HepG2 (cell line): ENCODE measurements at regions of chr12 and their contacts with region 1.

Region 1: GRCh38 chr12:10212201-10213131 is at the start of gene GABARAPL1:
- DNase-seq: peak; percentile 95
- ATAC-seq: peak; percentile 96
- H3K4me3 ChIP-seq: peak within 1 kb of the TSS; percentile 82 to 97 (median 91)
- H3K27ac ChIP-seq: peak within 1 kb of the TSS; percentile 80
- H3K4me1 ChIP-seq: peaks cover 19% of the 10 kb centered on the region; the same call in 1 of the 2 replicates
- H3K27me3 ChIP-seq: no peaks in the 10 kb centered on the region; a peak in 1 of 5 replicates
- CTCF ChIP-seq: no peak
- EP300 ChIP-seq: peak in 1 of 2 experiments; percentile 9; a peak in 1 of 4 replicates
- POLR2A ChIP-seq: peak; percentile 53 to 77; a peak in 3 of 4 replicates
- RAD21 ChIP-seq: no peak
- total RNA-seq, gene GABARAPL1: 7.9 and 8.1 TPM in 2 replicates

Region 2: GRCh38 chr12:10069099-10069498 is 143.4 kb before region 1 on chr12:
- CTCF ChIA-PET with region 1: no interaction called
- POLR2A ChIA-PET with region 1: no interaction called
- in situ Hi-C with region 1: no loop called
- intact Hi-C with region 1: no loop called
- DNase-seq: no peak
- ATAC-seq: no peak
- H3K4me3 ChIP-seq: no peak overlapping the region
- H3K27ac ChIP-seq: no peak overlapping the region
- H3K4me1 ChIP-seq: no peaks in the 10 kb centered on the region
- H3K27me3 ChIP-seq: peaks cover 2 to 4% of the 10 kb centered on the region in 2 experiments; a peak in 1 of 5 replicates
- CTCF ChIP-seq: no peak
- EP300 ChIP-seq: no peak
- POLR2A ChIP-seq: no peak
- RAD21 ChIP-seq: no peak

Region 3: DNA sequence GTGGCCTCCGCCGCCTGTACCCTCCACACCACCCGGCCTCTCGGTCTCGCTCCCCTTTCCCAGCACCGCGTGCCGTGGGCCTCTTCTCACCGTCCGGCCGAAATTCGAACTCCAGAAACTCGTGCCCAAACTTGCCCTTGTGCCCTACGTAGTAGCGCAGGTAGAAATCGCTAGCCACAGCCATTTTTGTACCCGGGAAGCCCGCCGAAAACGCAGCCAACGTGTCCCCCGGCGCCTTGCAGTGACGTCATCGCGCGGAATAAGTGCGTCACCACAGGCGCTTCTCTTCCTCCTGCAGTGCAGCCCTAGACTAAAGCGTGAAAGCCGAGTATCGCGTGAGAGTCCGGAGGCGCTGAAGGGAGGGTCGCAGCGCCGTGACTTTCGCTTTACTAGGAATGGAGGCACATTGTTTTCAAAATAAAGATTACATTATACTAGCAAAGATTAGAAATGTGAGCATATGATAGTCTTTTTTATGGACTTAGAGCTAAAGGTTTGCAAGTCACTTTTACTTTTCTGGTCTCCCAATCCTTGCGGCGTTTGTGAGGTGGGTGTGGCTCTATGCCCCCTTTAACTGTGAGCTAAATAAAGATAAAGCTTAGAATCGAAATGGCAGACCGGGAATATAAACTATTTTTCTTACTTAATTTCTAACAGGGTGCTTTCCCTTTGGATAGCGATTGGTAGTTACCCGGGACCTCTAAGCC is 401.0 kb after region 1 on chr12 and contains the start of gene MAGOHB:
- CTCF ChIA-PET with region 1: no interaction called
- POLR2A ChIA-PET with region 1: interaction called, 3 read pairs
- in situ Hi-C with region 1: no loop called
- intact Hi-C with region 1: loop called (anchors 1 kb)
- DNase-seq: peak; percentile 92
- ATAC-seq: peak; percentile 98
- H3K4me3 ChIP-seq: peak within 1 kb of the TSS; percentile 89 to 97 (median 90)
- H3K27ac ChIP-seq: peak within 1 kb of the TSS; percentile 86
- H3K4me1 ChIP-seq: peaks cover 26% of the 10 kb centered on the region
- H3K27me3 ChIP-seq: peaks cover 0 to 2% of the 10 kb centered on the region in 2 experiments; a peak in 1 of 5 replicates
- CTCF ChIP-seq: no peak; the same call in 1 of the 2 replicates
- EP300 ChIP-seq: no peak; a peak in 1 of 4 replicates
- POLR2A ChIP-seq: peak; percentile 70 to 94
- RAD21 ChIP-seq: no peak
- total RNA-seq, gene MAGOHB: 49.8 and 84.5 TPM in 2 replicates

Region 4: DNA sequence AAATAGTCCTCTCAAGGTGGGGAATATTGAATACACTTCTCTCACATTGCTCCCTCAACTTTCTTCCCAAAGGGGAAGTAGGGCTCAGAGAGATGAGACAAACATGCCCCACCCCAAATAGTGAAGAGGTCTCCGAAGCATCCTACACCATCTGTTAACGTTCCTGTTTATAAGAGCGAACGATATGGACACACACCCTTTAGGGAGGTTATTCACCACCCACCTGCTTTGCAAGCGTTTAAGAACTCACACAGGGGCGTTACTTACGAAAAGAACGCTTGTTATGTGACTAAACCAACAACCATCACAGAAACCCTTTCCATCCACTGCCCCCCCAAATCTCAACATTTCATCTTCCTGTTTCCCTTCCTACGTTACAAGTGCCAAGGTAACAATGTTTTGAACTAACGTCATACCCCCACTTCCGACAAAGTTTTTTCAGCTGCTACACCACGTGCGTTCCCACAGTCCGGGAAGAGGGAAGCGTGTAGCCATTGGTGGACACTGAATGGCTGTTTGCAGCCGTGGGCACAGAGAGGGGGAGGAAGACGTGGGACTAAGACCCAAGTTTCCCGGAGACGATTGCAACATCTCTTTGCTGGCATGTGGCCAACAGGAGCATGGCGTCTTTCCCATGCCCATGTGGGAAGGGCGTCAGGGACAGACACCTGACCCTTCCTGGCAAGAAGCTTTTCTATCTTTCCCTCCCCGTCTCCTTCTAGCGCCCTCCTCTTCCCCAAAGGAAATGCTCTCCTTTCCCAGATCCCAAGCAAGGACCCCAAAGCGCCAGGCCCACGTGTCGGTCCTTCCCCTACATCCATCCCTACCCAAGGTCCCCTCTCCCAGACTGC is 509.4 kb after region 1 on chr12:
- CTCF ChIA-PET with region 1: no interaction called
- POLR2A ChIA-PET with region 1: no interaction called
- in situ Hi-C with region 1: no loop called
- intact Hi-C with region 1: loop called (anchors 2 kb)
- DNase-seq: peak; percentile 81
- ATAC-seq: peak; percentile 66
- H3K4me3 ChIP-seq: peak overlapping the region; percentile 84 to 99 (median 93)
- H3K27ac ChIP-seq: peak overlapping the region; percentile 80
- H3K4me1 ChIP-seq: peaks cover 54% of the 10 kb centered on the region
- H3K27me3 ChIP-seq: peaks cover 0 to 11% of the 10 kb centered on the region in 2 experiments; a peak in 2 of 5 replicates
- CTCF ChIP-seq: peak; percentile 14; the same call in 1 of the 2 replicates
- EP300 ChIP-seq: 0 out of 4 replicates have a peak, but pooled peaks of 1 of the 2 experiments have one; percentile 24
- POLR2A ChIP-seq: peak; percentile 44; a peak in 2 of 4 replicates
- RAD21 ChIP-seq: no peak